ENCODE measurements at regions of chr10 and their contacts with region 1.

Region 1: GRCh38 chr10:110425684-110426293 is 71.9 kb upstream of the DUSP5 start:
- DNase-seq: peak; percentile 34
- H3K4me3 Mint-ChIP-seq: peak overlapping the region; percentile 28
- H3K27ac Mint-ChIP-seq: peak overlapping the region; percentile 85
- H3K4me1 Mint-ChIP-seq: peaks cover 60% of the 10 kb centered on the region
- H3K27me3 Mint-ChIP-seq: no peaks in the 10 kb centered on the region

Region 2: GRCh38 chr10:110326351-110327032 is 99.3 kb before region 1 on chr10:
- intact Hi-C with region 1: loop called (anchors 1 kb)
- DNase-seq: no peak
- H3K4me3 Mint-ChIP-seq: no peak overlapping the region
- H3K27ac Mint-ChIP-seq: peak overlapping the region; percentile 12
- H3K4me1 Mint-ChIP-seq: peaks cover 46% of the 10 kb centered on the region
- H3K27me3 Mint-ChIP-seq: no peaks in the 10 kb centered on the region

Region 3: GRCh38 chr10:110395725-110396651 is 29.8 kb before region 1 on chr10:
- intact Hi-C with region 1: loop called (anchors 1 kb)
- DNase-seq: no peak
- H3K4me3 Mint-ChIP-seq: no peak overlapping the region
- H3K27ac Mint-ChIP-seq: peak overlapping the region; percentile 78
- H3K4me1 Mint-ChIP-seq: peaks cover 56% of the 10 kb centered on the region
- H3K27me3 Mint-ChIP-seq: no peaks in the 10 kb centered on the region

Region 4: DNA sequence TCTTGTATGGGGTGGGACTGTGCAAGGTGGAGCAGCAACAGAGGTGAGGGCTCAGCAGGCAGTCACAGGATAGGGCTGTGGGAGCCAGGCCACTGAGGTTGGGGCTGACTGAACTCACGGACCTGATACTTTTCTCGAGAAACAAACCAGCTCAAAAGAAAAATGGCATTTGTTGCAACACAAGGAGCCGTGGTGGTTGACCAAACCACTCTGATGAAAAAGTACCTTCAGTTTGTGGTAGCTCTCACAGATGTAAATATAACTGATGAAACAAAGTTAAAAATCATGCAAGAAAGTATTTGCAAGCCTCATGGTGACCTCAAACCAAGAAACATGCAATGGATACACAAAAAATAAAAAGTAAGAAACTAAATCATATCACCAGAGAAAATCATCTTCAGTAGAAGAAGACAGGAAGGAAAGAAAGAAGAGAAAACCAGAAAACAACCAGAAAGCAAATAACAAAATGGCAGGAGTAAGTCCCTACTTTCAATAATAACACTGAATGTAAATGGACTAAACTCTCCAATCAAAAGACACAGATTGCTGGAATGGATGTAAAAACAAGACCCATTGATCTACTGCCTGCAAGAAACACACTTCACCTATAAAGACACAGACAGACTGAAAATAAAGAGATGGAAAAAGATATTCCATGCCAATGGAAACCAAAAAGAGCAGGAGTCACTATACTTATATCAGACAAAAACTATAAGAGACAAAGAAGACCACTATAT is 23.1 kb after region 1 on chr10:
- intact Hi-C with region 1: loop called (anchors 1 kb)
- DNase-seq: no peak
- H3K4me3 Mint-ChIP-seq: no peak overlapping the region
- H3K27ac Mint-ChIP-seq: peak overlapping the region; percentile 79
- H3K4me1 Mint-ChIP-seq: peaks cover 15% of the 10 kb centered on the region
- H3K27me3 Mint-ChIP-seq: peaks cover 2% of the 10 kb centered on the region

Region 5: GRCh38 chr10:110528224-110528997 is 102.6 kb after region 1 on chr10:
- intact Hi-C with region 1: loop called (anchors 2 kb)
- DNase-seq: no peak
- H3K4me3 Mint-ChIP-seq: peak overlapping the region; percentile 1
- H3K27ac Mint-ChIP-seq: peak overlapping the region; percentile 73
- H3K4me1 Mint-ChIP-seq: peaks cover 66% of the 10 kb centered on the region
- H3K27me3 Mint-ChIP-seq: no peaks in the 10 kb centered on the region

Region 6: DNA sequence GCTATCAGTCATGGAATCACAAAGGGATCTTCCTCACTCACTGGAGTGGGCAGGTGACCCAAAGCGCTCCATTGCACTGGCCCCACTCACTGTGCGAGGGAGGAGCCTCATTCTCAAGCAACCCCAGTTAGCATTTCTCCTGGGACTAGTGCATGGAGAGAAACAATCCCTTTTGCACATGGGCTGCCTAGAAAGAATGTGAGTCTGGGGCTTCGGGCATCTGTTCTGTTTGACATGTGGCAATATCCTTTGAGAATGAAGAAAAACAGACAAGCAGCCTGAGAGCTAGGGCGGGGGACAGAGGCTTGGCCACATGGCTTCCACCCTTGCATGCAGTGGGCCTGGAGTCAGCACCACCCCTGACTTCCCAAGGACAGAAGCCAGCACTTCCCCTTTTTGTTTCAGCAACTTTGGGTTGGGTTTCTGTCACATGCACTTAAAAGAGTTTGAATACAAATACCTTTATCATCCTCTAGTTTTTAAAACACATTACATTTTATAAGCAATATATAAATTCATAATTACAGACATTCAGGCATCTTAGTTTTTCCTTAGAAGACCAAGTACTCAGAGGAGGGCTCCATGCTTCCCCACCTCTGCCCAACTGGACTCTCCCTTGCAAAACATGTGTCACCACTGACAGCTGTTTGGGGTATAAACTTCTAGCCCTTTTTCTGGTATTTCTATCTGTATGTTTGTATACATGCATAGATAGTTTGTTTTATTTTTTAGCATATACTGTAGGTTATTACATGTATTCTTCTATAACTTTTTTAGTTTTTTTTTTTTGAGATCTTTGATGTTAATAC is 292.2 kb after region 1 on chr10:
- intact Hi-C with region 1: no loop called
- DNase-seq: no peak
- H3K4me3 Mint-ChIP-seq: no peak overlapping the region
- H3K27ac Mint-ChIP-seq: no peak overlapping the region
- H3K4me1 Mint-ChIP-seq: no peaks in the 10 kb centered on the region
- H3K27me3 Mint-ChIP-seq: peaks cover 8% of the 10 kb centered on the region